Natural killer cell (primary cell): ENCODE measurements at regions of chr19 and their contacts with region 1.

Region 1: DNA sequence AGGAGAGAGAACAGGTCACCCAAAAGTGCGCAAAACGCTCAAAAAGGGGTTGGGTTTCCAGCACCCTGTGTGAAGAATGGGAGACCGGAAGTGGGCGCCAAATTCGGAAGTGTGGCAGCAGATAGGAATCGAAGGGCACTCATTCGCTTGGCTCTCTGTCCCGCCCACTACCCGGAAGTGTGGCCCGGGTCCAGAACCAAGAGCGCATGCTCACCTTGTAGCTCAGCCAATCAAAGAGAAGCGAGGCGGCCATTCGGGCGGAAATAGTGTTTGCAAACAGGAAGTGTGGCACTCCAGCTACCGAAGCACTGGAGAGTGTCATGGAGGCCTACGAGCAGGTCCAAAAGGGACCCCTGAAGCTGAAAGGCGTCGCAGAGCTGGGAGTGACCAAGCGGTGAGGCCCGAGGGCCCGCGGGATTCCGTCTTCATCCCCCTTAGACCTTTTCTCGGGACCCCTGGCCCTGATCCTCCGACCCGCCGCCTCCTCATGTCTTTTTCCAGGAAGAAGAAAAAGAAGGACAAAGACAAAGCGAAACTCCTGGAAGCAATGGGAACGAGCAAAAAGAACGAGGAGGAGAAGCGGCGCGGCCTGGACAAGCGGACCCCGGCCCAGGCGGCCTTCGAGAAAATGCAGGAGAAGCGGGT is at the start of gene FAM32A:
- DNase-seq: peak; percentile 97 to 99
- ATAC-seq: peak; percentile 92 to 97 (median 94)
- H3K4me3 ChIP-seq: peak within 1 kb of the TSS; percentile 89
- H3K4me3 Mint-ChIP-seq: peak within 1 kb of the TSS; percentile 100
- H3K27ac ChIP-seq: peak within 1 kb of the TSS; percentile 77
- H3K27ac Mint-ChIP-seq: peak within 1 kb of the TSS; percentile 96 to 99
- H3K4me1 ChIP-seq: peaks cover 41% of the 10 kb centered on the region
- H3K4me1 Mint-ChIP-seq: peaks cover 25 to 33% of the 10 kb centered on the region in 2 donors
- H3K27me3 ChIP-seq: no peaks in the 10 kb centered on the region
- H3K27me3 Mint-ChIP-seq: no peaks in the 10 kb centered on the region
- CTCF ChIP-seq: no peak
- total RNA-seq, gene FAM32A: 46.3 to 69.3 (median 63.3) TPM

Region 2: GRCh38 chr19:15584541-15585115 is 600.6 kb before region 1 on chr19:
- intact Hi-C with region 1: loop called (anchors 5 kb)
- DNase-seq: peak; percentile 78 to 87
- ATAC-seq: peak; percentile 89 to 98 (median 89)
- H3K4me3 ChIP-seq: no peak overlapping the region
- H3K4me3 Mint-ChIP-seq: no peak overlapping the region
- H3K27ac ChIP-seq: no peak overlapping the region
- H3K27ac Mint-ChIP-seq: no peak overlapping the region
- H3K4me1 ChIP-seq: peaks cover 7% of the 10 kb centered on the region
- H3K4me1 Mint-ChIP-seq: peaks cover 6% of the 10 kb centered on the region in 2 donors
- H3K27me3 ChIP-seq: peaks cover 7% of the 10 kb centered on the region
- H3K27me3 Mint-ChIP-seq: peaks cover 15 to 26% of the 10 kb centered on the region in 2 donors
- CTCF ChIP-seq: peak; percentile 73

Region 3: GRCh38 chr19:16041299-16041990 is 143.8 kb before region 1 on chr19:
- intact Hi-C with region 1: loop called (anchors 1 kb)
- DNase-seq: peak; percentile 77 to 84
- ATAC-seq: peak; percentile 80 to 96 (median 87)
- H3K4me3 ChIP-seq: no peak overlapping the region
- H3K4me3 Mint-ChIP-seq: no peak overlapping the region
- H3K27ac ChIP-seq: no peak overlapping the region
- H3K27ac Mint-ChIP-seq: no peak overlapping the region
- H3K4me1 ChIP-seq: peaks cover 7% of the 10 kb centered on the region
- H3K4me1 Mint-ChIP-seq: peaks cover 0 to 5% of the 10 kb centered on the region in 2 donors
- H3K27me3 ChIP-seq: no peaks in the 10 kb centered on the region
- H3K27me3 Mint-ChIP-seq: peaks cover 0 to 3% of the 10 kb centered on the region in 2 donors
- CTCF ChIP-seq: peak; percentile 99

Region 4: GRCh38 chr19:16111160-16111908 is 73.9 kb before region 1 on chr19 and contains the start of gene RAB8A:
- intact Hi-C with region 1: loop called (anchors 1 kb)
- DNase-seq: peak; percentile 99 to 100
- ATAC-seq: peak; percentile 86 to 94 (median 87)
- H3K4me3 ChIP-seq: peak within 1 kb of the TSS; percentile 88
- H3K4me3 Mint-ChIP-seq: peak within 1 kb of the TSS; percentile 96
- H3K27ac ChIP-seq: peak within 1 kb of the TSS; percentile 91
- H3K27ac Mint-ChIP-seq: peak within 1 kb of the TSS; percentile 92 to 97
- H3K4me1 ChIP-seq: peaks cover 45% of the 10 kb centered on the region
- H3K4me1 Mint-ChIP-seq: peaks cover 22 to 35% of the 10 kb centered on the region in 2 donors
- H3K27me3 ChIP-seq: no peaks in the 10 kb centered on the region
- H3K27me3 Mint-ChIP-seq: no peaks in the 10 kb centered on the region
- CTCF ChIP-seq: peak; percentile 95
- total RNA-seq, gene RAB8A: 137 to 161 (median 149) TPM

Region 5: GRCh38 chr19:16125737-16126495 is 59.3 kb before region 1 on chr19:
- intact Hi-C with region 1: no loop called
- DNase-seq: no peak
- ATAC-seq: no peak
- H3K4me3 ChIP-seq: no peak overlapping the region
- H3K4me3 Mint-ChIP-seq: no peak overlapping the region
- H3K27ac ChIP-seq: no peak overlapping the region
- H3K27ac Mint-ChIP-seq: no peak overlapping the region
- H3K4me1 ChIP-seq: peaks cover 12% of the 10 kb centered on the region
- H3K4me1 Mint-ChIP-seq: peaks cover 0 to 15% of the 10 kb centered on the region in 2 donors
- H3K27me3 ChIP-seq: no peaks in the 10 kb centered on the region
- H3K27me3 Mint-ChIP-seq: no peaks in the 10 kb centered on the region
- CTCF ChIP-seq: no peak

Region 6: DNA sequence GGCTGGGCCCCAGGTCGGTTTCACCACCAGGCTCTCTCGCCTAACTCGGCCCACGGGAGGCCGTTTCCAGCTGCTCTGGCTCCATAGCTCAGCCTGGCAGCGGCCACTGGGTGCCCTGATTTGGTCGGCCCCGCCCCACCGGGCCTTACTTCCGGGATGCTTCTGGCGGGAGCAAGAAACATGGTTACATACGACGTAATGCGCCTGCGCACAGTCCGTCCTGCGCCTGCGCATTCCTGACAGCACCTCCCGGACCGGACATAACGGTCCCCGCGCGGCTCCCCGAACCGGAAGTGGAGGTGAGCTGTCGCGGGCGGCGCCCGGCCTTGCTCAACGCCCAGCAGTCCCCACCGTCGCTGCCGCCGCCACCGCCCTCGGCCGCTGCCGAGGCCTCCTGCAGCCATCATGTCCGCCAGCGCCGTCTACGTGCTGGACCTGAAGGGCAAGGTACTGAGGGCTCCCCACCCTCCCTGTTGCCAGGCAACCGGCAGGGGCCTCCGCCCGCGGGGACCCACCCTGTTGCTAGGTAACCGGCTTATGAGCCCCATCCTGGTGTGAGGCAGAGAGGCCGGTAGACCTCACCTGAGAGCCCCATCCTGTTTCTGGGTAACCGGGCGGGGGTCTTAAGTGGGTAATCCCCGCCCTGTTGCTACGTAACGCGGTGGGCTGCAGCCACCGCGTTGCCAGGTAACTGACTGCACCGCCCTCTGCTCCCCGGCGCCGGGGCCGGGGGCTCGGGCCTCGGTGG is 12.6 kb after region 1 on chr19 and contains the start of gene AP1M1:
- intact Hi-C with region 1: loop called (anchors 1 kb)
- DNase-seq: peak; percentile 99
- ATAC-seq: peak; percentile 89 to 93 (median 92)
- H3K4me3 ChIP-seq: peak within 1 kb of the TSS; percentile 97
- H3K4me3 Mint-ChIP-seq: peak within 1 kb of the TSS; percentile 87
- H3K27ac ChIP-seq: peak within 1 kb of the TSS; percentile 78
- H3K27ac Mint-ChIP-seq: peak within 1 kb of the TSS; percentile 95 to 97
- H3K4me1 ChIP-seq: peaks cover 31% of the 10 kb centered on the region
- H3K4me1 Mint-ChIP-seq: peaks cover 24 to 48% of the 10 kb centered on the region in 2 donors
- H3K27me3 ChIP-seq: no peaks in the 10 kb centered on the region
- H3K27me3 Mint-ChIP-seq: no peaks in the 10 kb centered on the region
- CTCF ChIP-seq: no peak
- total RNA-seq, gene AP1M1: 99.0 to 124 (median 100) TPM